ENCODE measurements at regions of chr13 and their contacts with region 1.

Region 1: DNA sequence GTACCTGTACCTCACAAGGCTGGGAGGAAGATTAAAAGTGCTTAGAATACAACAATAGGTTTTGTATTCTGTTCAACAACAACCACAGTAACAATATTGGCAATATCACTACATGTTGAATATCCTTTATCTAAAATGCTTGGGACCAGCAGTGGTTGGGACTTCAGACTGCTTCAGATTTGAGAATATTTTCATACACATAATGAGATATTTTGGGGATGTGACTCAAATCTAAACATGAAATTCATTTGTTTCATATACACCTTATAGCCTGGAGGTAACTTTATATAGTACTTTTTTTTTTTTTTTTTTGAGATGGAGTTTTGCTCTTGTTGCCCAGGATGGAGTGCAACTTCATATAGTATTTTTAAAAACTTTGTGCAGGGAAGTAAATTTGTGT is 73.9 kb downstream of the USP12 start:
- DNase-seq: no peak
- H3K4me3 ChIP-seq: no peak overlapping the region
- H3K27ac ChIP-seq: no peak overlapping the region
- H3K4me1 ChIP-seq: peaks cover 0 to 6% (median 2%) of the 10 kb centered on the region in 4 donors
- H3K27me3 ChIP-seq: no peaks in the 10 kb centered on the region
- CTCF ChIP-seq: no peak
- EP300 ChIP-seq: no peak
- POLR2A ChIP-seq: no peak

Region 2: GRCh38 chr13:27151798-27152599 is 54.3 kb after region 1 on chr13:
- intact Hi-C with region 1: loop called (anchors 10 kb)
- DNase-seq: no peak
- H3K4me3 ChIP-seq: no peak overlapping the region
- H3K27ac ChIP-seq: peak overlapping the region in 1 of 4 donors; percentile 2
- H3K4me1 ChIP-seq: peaks cover 0 to 54% (median 32%) of the 10 kb centered on the region in 4 donors
- H3K27me3 ChIP-seq: no peaks in the 10 kb centered on the region
- CTCF ChIP-seq: no peak
- EP300 ChIP-seq: no peak
- POLR2A ChIP-seq: no peak

Region 3: GRCh38 chr13:27933580-27934328 is 836.1 kb after region 1 on chr13:
- intact Hi-C with region 1: no loop called
- DNase-seq: no peak
- H3K4me3 ChIP-seq: no peak overlapping the region
- H3K27ac ChIP-seq: no peak overlapping the region
- H3K4me1 ChIP-seq: no peaks in the 10 kb centered on the region
- H3K27me3 ChIP-seq: peaks cover 14 to 49% (median 30%) of the 10 kb centered on the region in 3 donors
- CTCF ChIP-seq: no peak
- EP300 ChIP-seq: no peak
- POLR2A ChIP-seq: no peak

Measured in sigmoid colon (tissue), 7 donors.